Naive thymus-derived CD4-positive, alpha-beta T cell (primary cell): ENCODE measurements at regions of chr13 and their contacts with region 1.

Region 1: GRCh38 chr13:46492946-46493345 is 60.0 kb upstream of the LRCH1 start:
- DNase-seq: peak in 5 of 9 donors; percentile 19 to 38 (median 26)
- ATAC-seq: no peak
- H3K4me3 ChIP-seq: no peak overlapping the region
- H3K4me3 Mint-ChIP-seq: no peak overlapping the region
- H3K27ac ChIP-seq: no peak overlapping the region
- H3K27ac Mint-ChIP-seq: no peak overlapping the region
- H3K4me1 ChIP-seq: no peaks in the 10 kb centered on the region
- H3K4me1 Mint-ChIP-seq: no peaks in the 10 kb centered on the region
- H3K27me3 ChIP-seq: no peaks in the 10 kb centered on the region
- H3K27me3 Mint-ChIP-seq: peaks cover 0 to 5% (median 0%) of the 10 kb centered on the region in 5 donors

Region 2: GRCh38 chr13:46565808-46566750 is 73.1 kb after region 1 on chr13:
- CTCF ChIA-PET with region 1: no interaction called
- POLR2A ChIA-PET with region 1: no interaction called
- intact Hi-C with region 1: no loop called
- DNase-seq: no peak
- ATAC-seq: no peak
- H3K4me3 ChIP-seq: no peak overlapping the region
- H3K4me3 Mint-ChIP-seq: no peak overlapping the region
- H3K27ac ChIP-seq: no peak overlapping the region
- H3K27ac Mint-ChIP-seq: peak overlapping the region in 1 of 9 donors; percentile 67
- H3K4me1 ChIP-seq: no peaks in the 10 kb centered on the region
- H3K4me1 Mint-ChIP-seq: peaks cover 19 to 53% (median 30%) of the 10 kb centered on the region in 7 donors
- H3K27me3 ChIP-seq: no peaks in the 10 kb centered on the region
- H3K27me3 Mint-ChIP-seq: no peaks in the 10 kb centered on the region

Region 3: GRCh38 chr13:46721054-46721453 is 228.1 kb after region 1 on chr13:
- CTCF ChIA-PET with region 1: interaction called, 5 read pairs
- POLR2A ChIA-PET with region 1: no interaction called
- intact Hi-C with region 1: loop called in 1 of 2 experiments (anchors 1 kb)
- DNase-seq: peak in 7 of 9 donors; percentile 10 to 54 (median 44)
- ATAC-seq: peak; percentile 61
- H3K4me3 ChIP-seq: no peak overlapping the region
- H3K4me3 Mint-ChIP-seq: no peak overlapping the region
- H3K27ac ChIP-seq: no peak overlapping the region
- H3K27ac Mint-ChIP-seq: no peak overlapping the region
- H3K4me1 ChIP-seq: no peaks in the 10 kb centered on the region
- H3K4me1 Mint-ChIP-seq: peaks cover 0 to 5% (median 0%) of the 10 kb centered on the region in 7 donors
- H3K27me3 ChIP-seq: no peaks in the 10 kb centered on the region
- H3K27me3 Mint-ChIP-seq: no peaks in the 10 kb centered on the region

Region 4: GRCh38 chr13:46751811-46752635 is 259.1 kb after region 1 on chr13:
- CTCF ChIA-PET with region 1: no interaction called
- POLR2A ChIA-PET with region 1: no interaction called
- intact Hi-C with region 1: loop called in 1 of 2 experiments (anchors 1 kb)
- DNase-seq: peak in 8 of 9 donors; percentile 11 to 57 (median 23)
- ATAC-seq: peak; percentile 92
- H3K4me3 ChIP-seq: no peak overlapping the region
- H3K4me3 Mint-ChIP-seq: peak overlapping the region in 9 of 10 donors; percentile 5 to 71 (median 59)
- H3K27ac ChIP-seq: peak overlapping the region; percentile 16
- H3K27ac Mint-ChIP-seq: peak overlapping the region in 8 of 9 donors; percentile 39 to 85 (median 78)
- H3K4me1 ChIP-seq: peaks cover 11 to 13% of the 10 kb centered on the region in 2 donors
- H3K4me1 Mint-ChIP-seq: peaks cover 10 to 44% (median 34%) of the 10 kb centered on the region in 7 donors
- H3K27me3 ChIP-seq: no peaks in the 10 kb centered on the region
- H3K27me3 Mint-ChIP-seq: no peaks in the 10 kb centered on the region